ENCODE measurements at regions of chr7 and their contacts with region 1.

Region 1: DNA sequence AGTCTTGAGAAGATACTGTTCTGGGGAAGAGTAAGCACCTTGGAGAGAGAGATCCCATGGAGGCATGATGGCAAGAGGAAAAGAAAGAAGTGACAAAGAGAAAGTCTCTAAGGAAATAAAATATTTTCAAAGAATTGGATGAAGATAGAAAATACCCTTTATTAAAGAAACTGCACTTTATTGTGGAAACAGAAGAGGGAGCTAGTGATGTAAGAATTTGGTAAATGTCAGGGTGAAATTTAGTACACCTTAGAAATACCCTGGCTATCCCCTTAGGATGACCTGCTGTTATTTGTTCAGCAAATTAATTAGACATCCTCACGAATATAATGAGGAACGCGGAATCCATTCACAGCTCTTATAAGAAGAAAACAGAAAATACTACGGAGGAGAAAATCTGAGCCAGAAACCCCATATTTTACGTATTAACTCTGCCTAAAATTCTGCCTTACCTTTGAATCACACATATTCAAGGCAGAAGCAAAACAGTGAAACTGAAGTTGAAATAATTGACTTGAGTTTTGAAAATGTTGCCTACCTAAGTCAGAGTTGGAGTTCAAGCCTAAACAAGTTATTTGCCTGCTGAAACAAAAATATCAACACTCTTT is 90.7 kb downstream of the TFPI2 start:
- DNase-seq: peak in 1 of 4 experiments; percentile 14
- ATAC-seq: no peak
- H3K4me3 ChIP-seq: no peak overlapping the region
- H3K27ac ChIP-seq: no peak overlapping the region
- H3K4me1 ChIP-seq: no peaks in the 10 kb centered on the region
- H3K27me3 ChIP-seq: no peaks in the 10 kb centered on the region
- CTCF ChIP-seq: peak in 2 of 3 experiments; percentile 32 to 44; a peak in 3 of 6 replicates
- EP300 ChIP-seq: no peak
- POLR2A ChIP-seq: no peak
- RAD21 ChIP-seq: no peak

Region 2: DNA sequence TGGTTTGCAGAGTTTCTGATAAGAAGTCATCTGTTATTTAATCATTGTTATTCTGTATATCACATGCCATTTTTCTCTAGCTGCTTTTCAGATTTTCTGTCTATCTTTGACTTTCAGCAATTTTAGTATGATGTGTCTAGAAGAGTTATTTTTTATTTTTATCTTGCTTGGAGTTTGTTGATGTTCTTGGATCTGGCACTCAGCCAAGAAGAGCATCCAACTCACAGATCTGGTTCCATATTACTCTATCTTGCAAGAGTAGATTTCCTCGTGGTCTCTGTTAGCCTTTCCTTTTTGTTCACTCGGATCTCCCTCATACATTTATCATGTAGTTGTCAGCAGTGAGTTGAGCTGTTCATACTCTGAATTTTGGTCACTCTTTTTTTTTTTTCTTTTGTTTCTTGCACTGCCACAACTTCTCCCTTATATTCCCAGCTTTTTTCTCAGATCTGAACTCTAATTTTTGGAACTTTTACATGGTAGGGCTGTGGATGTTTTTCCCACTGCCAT is 170.5 kb before region 1 on chr7:
- CTCF ChIA-PET with region 1: no interaction called
- POLR2A ChIA-PET with region 1: no interaction called
- in situ Hi-C with region 1: no loop called
- intact Hi-C with region 1: loop called (anchors 5 kb)
- DNase-seq: peak in 1 of 4 experiments; percentile 37
- ATAC-seq: no peak; the same call in 2 of the 3 replicates
- H3K4me3 ChIP-seq: no peak overlapping the region
- H3K27ac ChIP-seq: no peak overlapping the region
- H3K4me1 ChIP-seq: no peaks in the 10 kb centered on the region
- H3K27me3 ChIP-seq: no peaks in the 10 kb centered on the region
- CTCF ChIP-seq: no peak
- EP300 ChIP-seq: no peak
- POLR2A ChIP-seq: no peak
- RAD21 ChIP-seq: no peak

Region 3: DNA sequence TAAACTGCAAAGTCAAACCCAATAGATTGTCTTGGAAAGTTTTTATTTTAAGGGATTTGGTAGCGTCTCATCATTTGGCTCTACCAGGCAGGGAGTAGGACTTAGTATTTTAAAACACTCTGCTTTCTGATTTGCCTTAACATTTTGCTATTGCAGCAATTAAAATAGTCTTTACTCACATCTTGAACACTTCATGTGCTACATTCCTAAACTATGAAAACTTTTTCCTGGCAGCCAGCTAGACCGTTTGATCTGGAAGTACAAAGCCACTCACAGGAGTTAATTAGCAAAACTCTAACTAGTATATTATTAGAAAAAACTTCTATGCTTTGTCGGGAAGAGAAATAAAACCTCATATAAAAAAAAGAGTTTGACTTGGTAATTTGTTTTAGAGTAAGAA is 20.7 kb before region 1 on chr7:
- CTCF ChIA-PET with region 1: no interaction called
- POLR2A ChIA-PET with region 1: no interaction called
- in situ Hi-C with region 1: no loop called
- intact Hi-C with region 1: no loop called
- DNase-seq: no peak
- ATAC-seq: no peak
- H3K4me3 ChIP-seq: no peak overlapping the region
- H3K27ac ChIP-seq: no peak overlapping the region
- H3K4me1 ChIP-seq: peaks cover 0 to 4% of the 10 kb centered on the region in 2 experiments; a peak in 2 of 5 replicates
- H3K27me3 ChIP-seq: no peaks in the 10 kb centered on the region
- CTCF ChIP-seq: no peak
- EP300 ChIP-seq: no peak
- POLR2A ChIP-seq: no peak
- RAD21 ChIP-seq: no peak

Region 4: GRCh38 chr7:93821463-93821862 is 21.6 kb after region 1 on chr7:
- CTCF ChIA-PET with region 1: no interaction called
- POLR2A ChIA-PET with region 1: no interaction called
- in situ Hi-C with region 1: no loop called
- intact Hi-C with region 1: no loop called
- DNase-seq: no peak
- ATAC-seq: no peak
- H3K4me3 ChIP-seq: no peak overlapping the region
- H3K27ac ChIP-seq: no peak overlapping the region
- H3K4me1 ChIP-seq: no peaks in the 10 kb centered on the region
- H3K27me3 ChIP-seq: no peaks in the 10 kb centered on the region
- CTCF ChIP-seq: no peak
- EP300 ChIP-seq: no peak
- POLR2A ChIP-seq: no peak
- RAD21 ChIP-seq: no peak